ENCODE measurements at regions of chr22 and their contacts with region 1.

Region 1: GRCh38 chr22:31290494-31291471 is 1.5 kb downstream of the PIK3IP1 start:
- DNase-seq: peak; percentile 97
- ATAC-seq: peak; percentile 79
- H3K4me3 Mint-ChIP-seq: peak overlapping the region; percentile 94
- H3K27ac Mint-ChIP-seq: peak overlapping the region; percentile 97
- H3K4me1 Mint-ChIP-seq: peaks cover 61% of the 10 kb centered on the region
- H3K27me3 Mint-ChIP-seq: no peaks in the 10 kb centered on the region
- CTCF ChIP-seq: no peak

Region 2: GRCh38 chr22:31107178-31107893 is 183.4 kb before region 1 on chr22 and contains the start of gene SELENOM:
- CTCF ChIA-PET with region 1: interaction called, 5 read pairs
- POLR2A ChIA-PET with region 1: no interaction called
- intact Hi-C with region 1: loop called (anchors 10 kb)
- DNase-seq: peak; percentile 89
- ATAC-seq: peak; percentile 95
- H3K4me3 Mint-ChIP-seq: peak within 1 kb of the TSS; percentile 78
- H3K27ac Mint-ChIP-seq: peak within 1 kb of the TSS; percentile 80
- H3K4me1 Mint-ChIP-seq: peaks cover 18% of the 10 kb centered on the region
- H3K27me3 Mint-ChIP-seq: no peaks in the 10 kb centered on the region
- CTCF ChIP-seq: peak; percentile 83
- total RNA-seq, gene SELENOM: 3.6 to 5.8 TPM

Region 3: GRCh38 chr22:31272522-31273446 is 18.0 kb before region 1 on chr22:
- CTCF ChIA-PET with region 1: interaction called, 47 read pairs
- POLR2A ChIA-PET with region 1: interaction called, 61 read pairs
- intact Hi-C with region 1: no loop called
- DNase-seq: peak; percentile 66
- ATAC-seq: peak; percentile 85
- H3K4me3 Mint-ChIP-seq: no peak overlapping the region
- H3K27ac Mint-ChIP-seq: no peak overlapping the region
- H3K4me1 Mint-ChIP-seq: peaks cover 40% of the 10 kb centered on the region
- H3K27me3 Mint-ChIP-seq: no peaks in the 10 kb centered on the region
- CTCF ChIP-seq: peak; percentile 57

Region 4: GRCh38 chr22:31302006-31302405 is 11.2 kb after region 1 on chr22:
- CTCF ChIA-PET with region 1: interaction called, 196 read pairs
- POLR2A ChIA-PET with region 1: interaction called, 63 read pairs
- intact Hi-C with region 1: no loop called
- DNase-seq: no peak
- ATAC-seq: no peak
- H3K4me3 Mint-ChIP-seq: no peak overlapping the region
- H3K27ac Mint-ChIP-seq: no peak overlapping the region
- H3K4me1 Mint-ChIP-seq: peaks cover 30% of the 10 kb centered on the region
- H3K27me3 Mint-ChIP-seq: no peaks in the 10 kb centered on the region
- CTCF ChIP-seq: no peak

Region 5: DNA sequence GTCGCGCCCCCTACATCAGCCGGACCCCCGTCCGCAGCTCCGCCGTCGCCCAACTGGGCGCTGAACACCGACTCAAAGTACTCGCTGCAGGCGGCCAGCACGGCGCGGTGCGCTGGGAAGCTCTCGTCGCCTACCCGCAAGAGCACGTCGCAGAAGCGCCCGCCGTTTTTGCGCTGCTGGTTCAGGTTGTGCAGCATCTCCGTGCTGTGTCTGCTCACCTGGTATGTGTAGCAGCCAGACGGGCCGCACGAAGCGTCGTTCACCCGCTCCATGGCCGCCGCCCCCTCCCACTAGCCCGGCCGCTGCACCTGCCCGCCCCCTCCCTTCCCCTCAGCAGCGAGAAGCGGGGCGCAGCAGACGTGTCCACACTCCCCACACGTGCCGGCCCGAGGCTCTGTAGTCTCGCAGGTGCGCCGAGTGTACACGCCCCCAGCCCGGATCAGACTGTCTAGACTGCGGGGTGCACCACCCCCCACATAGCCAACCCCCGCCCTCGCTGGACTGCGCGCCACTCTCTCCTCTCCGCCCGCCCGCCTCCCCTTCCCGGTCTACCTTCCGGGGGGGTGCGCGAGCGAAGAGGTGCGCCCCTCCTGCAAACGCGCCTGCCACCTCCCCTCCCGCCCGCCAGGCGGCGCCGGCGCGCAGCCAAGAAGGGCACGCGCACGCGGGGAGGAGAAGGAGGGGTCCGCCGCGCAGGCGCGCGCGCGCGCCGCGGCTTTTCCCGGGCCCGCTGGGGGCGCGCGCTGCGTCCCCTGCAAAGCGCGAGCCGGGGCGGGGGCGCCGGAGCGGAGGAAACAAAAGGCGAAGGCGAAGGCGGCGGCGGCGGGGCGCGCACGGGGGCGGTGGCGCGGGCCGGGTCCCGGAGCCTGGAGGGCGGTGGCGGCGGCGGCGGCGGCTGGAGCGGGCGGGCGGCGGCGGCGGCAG is 54.8 kb after region 1 on chr22:
- CTCF ChIA-PET with region 1: interaction called, 7 read pairs
- POLR2A ChIA-PET with region 1: interaction called, 12 read pairs
- intact Hi-C with region 1: no loop called
- DNase-seq: peak; percentile 89
- ATAC-seq: peak; percentile 67
- H3K4me3 Mint-ChIP-seq: peak overlapping the region; percentile 94
- H3K27ac Mint-ChIP-seq: peak overlapping the region; percentile 94
- H3K4me1 Mint-ChIP-seq: peaks cover 33% of the 10 kb centered on the region
- H3K27me3 Mint-ChIP-seq: no peaks in the 10 kb centered on the region
- CTCF ChIP-seq: peak; percentile 88

Measured in activated CD8-positive, alpha-beta T cell treated with anti-CD3 and anti-CD28 coated beads for 36 hours (primary cell).